MCF 10A (cell line): ENCODE measurements at regions of chr11 and their contacts with region 1.

Region 1: GRCh38 chr11:125887373-125888324 is at the start of gene HYLS1:
- DNase-seq: peak; percentile 96
- H3K4me3 Mint-ChIP-seq: peak within 1 kb of the TSS; percentile 83
- H3K27ac Mint-ChIP-seq: peak within 1 kb of the TSS; percentile 70
- H3K4me1 Mint-ChIP-seq: peaks cover 15% of the 10 kb centered on the region
- H3K27me3 Mint-ChIP-seq: no peaks in the 10 kb centered on the region
- CTCF ChIP-seq: no peak
- total RNA-seq, gene HYLS1: 7.9 and 10.2 TPM in 2 replicates

Region 2: GRCh38 chr11:125902927-125903710 is 15.5 kb after region 1 on chr11 and contains the start of gene PUS3:
- CTCF ChIA-PET with region 1: interaction called, 18 read pairs
- POLR2A ChIA-PET with region 1: interaction called, 25 read pairs
- intact Hi-C with region 1: no loop called
- DNase-seq: peak; percentile 87
- H3K4me3 Mint-ChIP-seq: peak within 1 kb of the TSS; percentile 97
- H3K27ac Mint-ChIP-seq: peak within 1 kb of the TSS; percentile 90
- H3K4me1 Mint-ChIP-seq: peaks cover 10% of the 10 kb centered on the region
- H3K27me3 Mint-ChIP-seq: peaks cover 23% of the 10 kb centered on the region
- CTCF ChIP-seq: no peak
- total RNA-seq, gene PUS3: 12.7 and 16.5 TPM in 2 replicates